ENCODE measurements at regions of chr3 and their contacts with region 1.

Region 1: GRCh38 chr3:120170223-120170622 is 76.0 kb upstream of the GSK3B start:
- DNase-seq: peak; percentile 85
- ATAC-seq: peak; percentile 71
- H3K4me3 ChIP-seq: no peak overlapping the region
- H3K27ac ChIP-seq: no peak overlapping the region
- H3K4me1 ChIP-seq: peaks cover 26% of the 10 kb centered on the region
- H3K27me3 ChIP-seq: no peaks in the 10 kb centered on the region
- CTCF ChIP-seq: no peak
- POLR2A ChIP-seq: no peak
- RAD21 ChIP-seq: no peak

Region 2: DNA sequence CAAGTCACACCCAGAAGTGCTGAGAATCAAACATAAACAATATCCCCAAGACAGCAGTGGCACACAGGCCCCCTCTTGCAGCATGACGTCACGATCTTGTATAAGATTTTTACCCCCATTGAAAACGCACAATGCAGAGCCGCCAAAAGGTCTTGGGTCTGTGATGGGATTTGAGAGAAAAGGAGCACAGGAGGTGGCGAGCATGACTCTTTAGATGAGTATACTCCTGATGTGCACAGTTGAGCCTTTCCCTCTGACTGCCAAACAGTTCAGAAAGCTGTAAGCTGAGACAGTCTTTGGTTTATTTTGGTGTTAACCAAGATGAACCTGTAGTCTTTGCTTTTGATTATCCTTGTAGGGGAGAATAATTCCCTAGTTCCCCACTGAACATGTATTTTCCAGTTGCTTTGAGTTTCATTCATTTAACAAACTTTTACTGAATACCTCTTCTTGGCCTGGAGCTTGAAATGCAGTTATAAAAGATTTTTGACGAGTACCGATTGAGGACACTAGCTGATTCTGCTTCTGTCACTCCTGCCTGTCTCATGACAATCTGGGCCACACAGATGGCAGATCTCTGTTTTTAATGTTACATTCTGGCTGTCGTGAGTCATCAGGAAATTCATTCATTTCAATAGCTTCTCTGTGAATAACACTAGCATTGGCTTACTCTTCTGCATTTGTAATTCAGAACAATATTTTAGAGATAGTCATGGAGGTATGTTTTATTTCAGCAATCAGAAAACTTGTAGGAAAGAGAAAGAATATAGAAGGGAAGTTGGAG is 438.5 kb before region 1 on chr3:
- CTCF ChIA-PET with region 1: no interaction called
- POLR2A ChIA-PET with region 1: no interaction called
- dilution Hi-C with region 1: no loop called
- in situ Hi-C with region 1: no loop called
- intact Hi-C with region 1: no loop called
- DNase-seq: peak; percentile 30
- ATAC-seq: peak; percentile 32
- H3K4me3 ChIP-seq: no peak overlapping the region
- H3K27ac ChIP-seq: no peak overlapping the region
- H3K4me1 ChIP-seq: no peaks in the 10 kb centered on the region
- H3K27me3 ChIP-seq: peaks cover 7% of the 10 kb centered on the region
- CTCF ChIP-seq: no peak
- POLR2A ChIP-seq: no peak
- RAD21 ChIP-seq: no peak

Region 3: DNA sequence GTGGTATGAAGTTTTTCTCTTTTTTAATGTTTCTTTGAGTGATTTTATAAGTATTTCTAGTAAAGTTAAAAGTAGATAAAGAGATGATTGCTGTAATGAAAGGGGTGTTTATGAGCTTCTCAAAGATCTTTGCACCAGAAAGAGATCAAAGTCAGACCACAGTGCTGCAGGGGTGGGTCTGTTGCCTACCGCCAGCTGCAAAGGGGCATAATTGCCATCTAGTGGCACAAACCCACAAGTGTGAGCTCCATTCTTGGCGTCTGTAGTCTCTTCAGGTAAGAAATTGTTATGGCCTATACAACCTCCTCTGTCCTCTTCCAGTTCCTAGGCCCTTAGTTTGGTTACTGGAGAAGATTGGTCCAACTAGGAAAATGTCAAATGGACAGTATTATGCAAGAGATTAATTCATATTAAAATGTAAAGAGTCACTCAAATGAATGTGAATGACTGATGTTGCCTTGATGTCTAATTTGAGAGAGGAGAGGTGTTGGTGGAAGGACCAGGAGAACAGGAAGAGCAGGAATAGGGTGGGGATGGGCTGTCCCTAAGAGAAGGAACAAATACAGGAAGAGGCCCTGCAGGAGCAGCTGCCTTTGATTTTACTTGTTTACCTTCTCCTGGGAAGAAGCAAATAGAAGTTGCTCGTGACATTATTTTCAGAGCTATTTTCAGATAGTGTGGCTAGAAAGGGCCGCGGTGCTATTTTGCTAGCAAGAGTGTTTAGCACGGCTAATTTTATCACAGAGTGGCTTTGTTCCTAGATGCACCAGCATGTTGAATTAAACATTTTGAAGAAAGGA is 23.0 kb before region 1 on chr3:
- CTCF ChIA-PET with region 1: no interaction called
- POLR2A ChIA-PET with region 1: interaction called, 11 read pairs
- dilution Hi-C with region 1: no loop called
- in situ Hi-C with region 1: no loop called
- intact Hi-C with region 1: no loop called
- DNase-seq: no peak
- ATAC-seq: no peak
- H3K4me3 ChIP-seq: no peak overlapping the region
- H3K27ac ChIP-seq: no peak overlapping the region
- H3K4me1 ChIP-seq: peaks cover 10% of the 10 kb centered on the region
- H3K27me3 ChIP-seq: no peaks in the 10 kb centered on the region
- CTCF ChIP-seq: no peak
- POLR2A ChIP-seq: no peak
- RAD21 ChIP-seq: no peak

Measured in IMR-90 (cell line).